ENCODE measurements at regions of chr6 and their contacts with region 1.

Region 1: GRCh38 chr6:13696226-13696625 is 15.4 kb downstream of the RANBP9 start:
- DNase-seq: peak; percentile 35
- ATAC-seq: no peak
- H3K4me3 ChIP-seq: no peak overlapping the region
- H3K27ac ChIP-seq: no peak overlapping the region
- H3K4me1 ChIP-seq: peaks cover 9% of the 10 kb centered on the region
- H3K27me3 ChIP-seq: no peaks in the 10 kb centered on the region
- CTCF ChIP-seq: no peak

Region 2: DNA sequence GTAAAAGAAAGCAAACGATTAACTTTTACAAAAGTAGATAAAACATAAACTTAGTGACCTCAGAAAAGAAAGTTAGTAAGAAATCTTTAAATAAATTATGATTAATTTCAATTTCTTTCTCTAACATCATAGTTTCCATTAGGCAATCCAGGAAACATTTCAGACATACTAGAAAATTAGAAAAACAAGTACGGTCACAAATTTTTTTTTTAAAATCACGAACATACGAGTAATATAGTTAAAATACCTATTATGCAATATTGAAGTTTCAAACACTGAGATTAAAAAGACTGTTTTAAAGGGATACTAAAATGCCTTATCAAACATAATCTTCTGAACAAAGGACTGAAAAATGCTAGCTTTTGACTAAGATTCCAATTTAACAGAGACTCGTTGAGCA is 54.9 kb before region 1 on chr6:
- CTCF ChIA-PET with region 1: no interaction called
- POLR2A ChIA-PET with region 1: no interaction called
- intact Hi-C with region 1: loop called (anchors 10 kb)
- DNase-seq: no peak
- ATAC-seq: no peak
- H3K4me3 ChIP-seq: no peak overlapping the region
- H3K27ac ChIP-seq: no peak overlapping the region
- H3K4me1 ChIP-seq: no peaks in the 10 kb centered on the region
- H3K27me3 ChIP-seq: no peaks in the 10 kb centered on the region
- CTCF ChIP-seq: no peak

Region 3: GRCh38 chr6:13664703-13665352 is 31.4 kb before region 1 on chr6:
- CTCF ChIA-PET with region 1: no interaction called
- POLR2A ChIA-PET with region 1: no interaction called
- intact Hi-C with region 1: loop called (anchors 5 kb)
- DNase-seq: no peak
- ATAC-seq: no peak
- H3K4me3 ChIP-seq: no peak overlapping the region
- H3K27ac ChIP-seq: no peak overlapping the region
- H3K4me1 ChIP-seq: peaks cover 16% of the 10 kb centered on the region
- H3K27me3 ChIP-seq: no peaks in the 10 kb centered on the region
- CTCF ChIP-seq: no peak

Measured in PC-3 (cell line).